Astrocyte of the spinal cord (primary cell): ENCODE measurements at regions of chr15 and their contacts with region 1.

Region 1: GRCh38 chr15:40274350-40275274 is 8.3 kb downstream of the ANKRD63 start:
- DNase-seq: peak; percentile 80
- H3K4me3 ChIP-seq: no peak overlapping the region
- CTCF ChIP-seq: peak; percentile 100

Region 2: GRCh38 chr15:40405501-40406381 is 131.1 kb after region 1 on chr15 and contains the start of gene IVD:
- in situ Hi-C with region 1: loop called (anchors 25 kb)
- DNase-seq: peak; percentile 96
- H3K4me3 ChIP-seq: peak within 1 kb of the TSS; percentile 87
- CTCF ChIP-seq: no peak